ENCODE measurements at regions of chr1 and their contacts with region 1.

Region 1: GRCh38 chr1:179365320-179366092 is at the start of gene AXDND1:
- DNase-seq: peak; percentile 95
- H3K4me3 ChIP-seq: peak within 1 kb of the TSS; percentile 60
- H3K27ac ChIP-seq: peak within 1 kb of the TSS; percentile 97
- H3K4me1 ChIP-seq: no peaks in the 10 kb centered on the region
- H3K27me3 ChIP-seq: no peaks in the 10 kb centered on the region
- CTCF ChIP-seq: no peak; the same call in 1 of the 2 replicates
- total RNA-seq, gene AXDND1: 0.85 TPM in 1 of 2 replicates, not detected in the other

Region 2: GRCh38 chr1:178774263-178774662 is 591.2 kb before region 1 on chr1:
- CTCF ChIA-PET with region 1: no interaction called
- POLR2A ChIA-PET with region 1: no interaction called
- intact Hi-C with region 1: loop called (anchors 10 kb)
- DNase-seq: peak; percentile 49
- H3K4me3 ChIP-seq: no peak overlapping the region
- H3K27ac ChIP-seq: no peak overlapping the region
- H3K4me1 ChIP-seq: no peaks in the 10 kb centered on the region
- H3K27me3 ChIP-seq: no peaks in the 10 kb centered on the region
- CTCF ChIP-seq: peak; percentile 64

Region 3: GRCh38 chr1:179081687-179082332 is 283.7 kb before region 1 on chr1 and contains the start of gene TOR3A:
- CTCF ChIA-PET with region 1: no interaction called
- POLR2A ChIA-PET with region 1: no interaction called
- intact Hi-C with region 1: loop called (anchors 1 kb)
- DNase-seq: peak; percentile 82
- H3K4me3 ChIP-seq: peak within 1 kb of the TSS; percentile 84
- H3K27ac ChIP-seq: peak within 1 kb of the TSS; percentile 72
- H3K4me1 ChIP-seq: peaks cover 6% of the 10 kb centered on the region
- H3K27me3 ChIP-seq: no peaks in the 10 kb centered on the region
- CTCF ChIP-seq: no peak
- total RNA-seq, gene TOR3A: 18.0 and 21.0 TPM in 2 replicates

Region 4: DNA sequence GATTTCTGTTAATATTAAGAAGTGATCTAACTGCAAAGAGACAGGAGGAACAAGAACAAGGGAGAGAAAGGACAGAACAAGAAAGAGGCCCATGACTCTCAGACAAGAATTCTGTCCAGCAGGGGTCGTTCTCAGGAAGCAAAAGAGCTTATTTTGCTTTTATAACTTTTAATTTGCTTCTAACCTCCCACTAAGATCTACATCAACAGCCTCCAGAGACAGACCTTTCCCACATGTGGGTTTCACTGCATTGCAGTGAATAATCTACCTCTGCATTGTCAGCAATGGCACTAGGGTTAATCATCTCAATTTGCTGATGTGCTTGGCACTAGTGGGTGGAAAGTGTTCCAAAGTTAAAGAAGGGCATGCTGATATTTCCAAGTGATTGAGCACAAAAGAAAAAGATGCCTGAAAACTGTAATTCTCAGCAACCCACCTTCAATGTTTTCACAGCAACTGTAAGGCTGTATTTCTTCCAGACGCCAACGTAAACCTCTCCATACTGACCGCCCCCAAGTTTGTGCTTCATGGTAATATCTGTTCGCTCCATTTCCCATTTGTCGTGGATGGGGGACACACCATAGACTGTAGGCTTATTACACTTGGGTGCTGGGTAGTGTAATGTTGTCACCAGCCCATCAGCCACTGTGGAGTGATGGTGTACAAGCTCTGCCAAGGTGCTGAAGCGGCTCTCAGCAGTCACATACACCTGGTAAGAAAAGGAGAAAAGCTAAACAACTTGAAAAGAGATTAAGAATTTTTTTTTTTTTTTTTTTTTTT is 244.2 kb before region 1 on chr1:
- CTCF ChIA-PET with region 1: no interaction called
- POLR2A ChIA-PET with region 1: no interaction called
- intact Hi-C with region 1: loop called (anchors 5 kb)
- DNase-seq: peak; percentile 68
- H3K4me3 ChIP-seq: no peak overlapping the region
- H3K27ac ChIP-seq: no peak overlapping the region
- H3K4me1 ChIP-seq: no peaks in the 10 kb centered on the region
- H3K27me3 ChIP-seq: no peaks in the 10 kb centered on the region
- CTCF ChIP-seq: peak; percentile 76

Region 5: GRCh38 chr1:179241523-179242097 is 123.9 kb before region 1 on chr1:
- CTCF ChIA-PET with region 1: no interaction called
- POLR2A ChIA-PET with region 1: no interaction called
- intact Hi-C with region 1: no loop called
- DNase-seq: no peak
- H3K4me3 ChIP-seq: no peak overlapping the region
- H3K27ac ChIP-seq: no peak overlapping the region
- H3K4me1 ChIP-seq: no peaks in the 10 kb centered on the region
- H3K27me3 ChIP-seq: no peaks in the 10 kb centered on the region
- CTCF ChIP-seq: no peak

Region 6: GRCh38 chr1:179251675-179252074 is 113.8 kb before region 1 on chr1:
- CTCF ChIA-PET with region 1: no interaction called
- POLR2A ChIA-PET with region 1: no interaction called
- intact Hi-C with region 1: loop called (anchors 2 kb)
- DNase-seq: peak; percentile 48
- H3K4me3 ChIP-seq: no peak overlapping the region
- H3K27ac ChIP-seq: no peak overlapping the region
- H3K4me1 ChIP-seq: no peaks in the 10 kb centered on the region
- H3K27me3 ChIP-seq: no peaks in the 10 kb centered on the region
- CTCF ChIP-seq: peak; percentile 59

Region 7: DNA sequence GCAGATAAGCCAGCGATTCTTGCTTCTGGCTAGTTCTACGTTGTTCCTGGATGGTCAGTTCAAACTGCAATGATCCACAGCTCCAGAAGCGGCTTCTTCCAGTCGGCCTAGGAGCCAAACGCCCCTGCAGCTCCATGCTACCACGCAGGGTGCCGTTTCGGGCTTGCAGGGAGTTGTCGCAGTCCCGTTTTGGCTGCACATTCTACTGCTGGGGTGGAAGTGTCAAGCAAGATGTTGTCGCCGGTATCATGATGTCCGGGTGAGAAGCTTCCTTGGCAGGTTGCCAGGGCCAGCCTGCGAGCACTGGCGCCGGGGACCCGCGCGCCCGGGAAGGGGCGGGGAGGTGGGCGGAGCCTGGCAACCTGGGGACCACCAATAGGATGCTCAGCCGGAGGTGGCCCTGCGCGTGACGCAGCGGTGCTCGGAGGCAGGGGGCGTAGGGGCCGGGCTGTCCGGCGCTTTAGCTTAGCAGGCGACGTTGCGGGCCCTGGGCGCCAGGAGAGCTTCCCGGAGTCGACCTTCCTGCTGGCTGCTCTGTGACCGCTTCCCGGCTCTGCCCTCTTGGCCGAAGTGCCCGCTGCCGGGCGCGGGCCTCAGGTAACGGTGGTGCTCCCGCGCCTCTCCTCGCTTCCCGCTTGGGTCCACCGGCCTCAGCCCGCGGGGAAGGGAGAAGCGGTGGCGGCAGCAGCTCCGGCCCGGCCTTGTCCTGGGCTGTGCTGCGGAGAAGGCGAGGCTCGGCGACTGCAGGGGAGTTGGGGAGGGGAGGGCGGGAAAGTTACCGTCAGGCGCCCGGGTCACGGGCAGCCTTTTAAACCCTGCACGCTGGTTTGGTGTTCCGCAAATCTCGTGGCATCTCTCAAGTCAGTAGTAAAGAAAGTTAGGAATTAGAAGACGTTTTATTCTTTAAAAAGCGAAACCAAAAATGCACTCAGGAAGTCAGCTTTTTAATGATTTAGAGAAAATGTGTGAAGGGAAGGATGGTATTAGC is 71.9 kb before region 1 on chr1 and contains the start of gene SOAT1:
- CTCF ChIA-PET with region 1: no interaction called
- POLR2A ChIA-PET with region 1: no interaction called
- intact Hi-C with region 1: no loop called
- DNase-seq: peak; percentile 95
- H3K4me3 ChIP-seq: peak within 1 kb of the TSS; percentile 66
- H3K27ac ChIP-seq: peak within 1 kb of the TSS; percentile 83
- H3K4me1 ChIP-seq: peaks cover 9% of the 10 kb centered on the region
- H3K27me3 ChIP-seq: no peaks in the 10 kb centered on the region
- CTCF ChIP-seq: no peak
- total RNA-seq, gene SOAT1: 49.9 and 53.0 TPM in 2 replicates